Sciatic nerve (tissue), 2 donors: ENCODE measurements at regions of chr12 and their contacts with region 1.

Region 1: GRCh38 chr12:121712461-121713256 is at the start of gene TMEM120B:
- DNase-seq: peak; percentile 92
- ATAC-seq: peak; percentile 90
- total RNA-seq, gene TMEM120B: 20.6 TPM

Region 2: DNA sequence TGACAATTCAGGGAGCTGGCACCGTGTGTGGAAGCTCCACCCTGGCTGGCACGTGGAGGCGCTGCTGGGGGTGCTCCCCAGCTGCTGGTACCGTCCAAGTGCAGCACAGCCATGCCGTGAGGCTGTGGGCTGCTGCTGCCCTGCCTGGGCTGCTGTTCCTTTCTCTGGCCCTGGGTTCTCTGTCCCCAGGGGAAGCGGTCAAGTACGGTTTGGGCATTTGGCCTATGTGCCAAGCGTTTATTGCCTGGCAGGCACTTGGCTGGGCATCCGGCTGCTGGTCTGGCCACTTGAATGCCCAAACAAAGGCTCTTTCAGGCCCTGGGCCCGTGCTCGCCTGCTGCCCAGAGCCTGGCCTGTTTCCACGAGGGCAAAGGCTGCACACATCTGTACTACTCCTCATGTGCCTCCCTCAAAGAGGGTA is 41.2 kb after region 1 on chr12:
- intact Hi-C with region 1: loop called (anchors 2 kb)
- DNase-seq: no peak
- ATAC-seq: peak; percentile 79